GM10248 (cell line): ENCODE measurements at regions of chr20 and their contacts with region 1.

Region 1: GRCh38 chr20:33992923-33993575 is 662 bp upstream of the RALY start:
- DNase-seq: peak; percentile 99
- CTCF ChIP-seq: no peak

Region 2: GRCh38 chr20:33925867-33926266 is 67.2 kb before region 1 on chr20:
- CTCF ChIA-PET with region 1: no interaction called
- POLR2A ChIA-PET with region 1: no interaction called
- DNase-seq: no peak
- CTCF ChIP-seq: no peak

Region 3: GRCh38 chr20:34111702-34112599 is 118.9 kb after region 1 on chr20 and contains the start of gene EIF2S2:
- CTCF ChIA-PET with region 1: no interaction called
- POLR2A ChIA-PET with region 1: interaction called, 10 read pairs
- DNase-seq: peak; percentile 98
- CTCF ChIP-seq: no peak